ENCODE measurements at regions of chr14 and their contacts with region 1.

Region 1: GRCh38 chr14:50532502-50533240 is at the start of gene MAP4K5:
- DNase-seq: peak; percentile 90
- H3K4me3 ChIP-seq: peak within 1 kb of the TSS; percentile 90 to 98 (median 97)
- H3K27ac ChIP-seq: peak within 1 kb of the TSS; percentile 82
- H3K4me1 ChIP-seq: peaks cover 38% of the 10 kb centered on the region
- H3K27me3 ChIP-seq: no peaks in the 10 kb centered on the region
- CTCF ChIP-seq: peak; percentile 95 to 96
- POLR2A ChIP-seq: peak; percentile 68
- total RNA-seq, gene MAP4K5: 60.1 and 73.7 TPM in 2 replicates

Region 2: GRCh38 chr14:49862089-49862673 is 670.5 kb before region 1 on chr14:
- CTCF ChIA-PET with region 1: interaction called, 4 read pairs
- POLR2A ChIA-PET with region 1: no interaction called
- dilution Hi-C with region 1: no loop called
- intact Hi-C with region 1: loop called (anchors 2 kb)
- DNase-seq: peak; percentile 93
- H3K4me3 ChIP-seq: peak overlapping the region; percentile 59 to 91 (median 73)
- H3K27ac ChIP-seq: peak overlapping the region; percentile 77
- H3K4me1 ChIP-seq: peaks cover 15% of the 10 kb centered on the region
- H3K27me3 ChIP-seq: no peaks in the 10 kb centered on the region
- CTCF ChIP-seq: peak; percentile 100
- POLR2A ChIP-seq: no peak

Region 3: GRCh38 chr14:50173891-50174290 is 358.8 kb before region 1 on chr14:
- CTCF ChIA-PET with region 1: no interaction called
- POLR2A ChIA-PET with region 1: no interaction called
- dilution Hi-C with region 1: no loop called
- intact Hi-C with region 1: loop called (anchors 5 kb)
- DNase-seq: no peak
- H3K4me3 ChIP-seq: no peak overlapping the region
- H3K27ac ChIP-seq: no peak overlapping the region
- H3K4me1 ChIP-seq: no peaks in the 10 kb centered on the region
- H3K27me3 ChIP-seq: no peaks in the 10 kb centered on the region
- CTCF ChIP-seq: no peak
- POLR2A ChIP-seq: no peak

Region 4: DNA sequence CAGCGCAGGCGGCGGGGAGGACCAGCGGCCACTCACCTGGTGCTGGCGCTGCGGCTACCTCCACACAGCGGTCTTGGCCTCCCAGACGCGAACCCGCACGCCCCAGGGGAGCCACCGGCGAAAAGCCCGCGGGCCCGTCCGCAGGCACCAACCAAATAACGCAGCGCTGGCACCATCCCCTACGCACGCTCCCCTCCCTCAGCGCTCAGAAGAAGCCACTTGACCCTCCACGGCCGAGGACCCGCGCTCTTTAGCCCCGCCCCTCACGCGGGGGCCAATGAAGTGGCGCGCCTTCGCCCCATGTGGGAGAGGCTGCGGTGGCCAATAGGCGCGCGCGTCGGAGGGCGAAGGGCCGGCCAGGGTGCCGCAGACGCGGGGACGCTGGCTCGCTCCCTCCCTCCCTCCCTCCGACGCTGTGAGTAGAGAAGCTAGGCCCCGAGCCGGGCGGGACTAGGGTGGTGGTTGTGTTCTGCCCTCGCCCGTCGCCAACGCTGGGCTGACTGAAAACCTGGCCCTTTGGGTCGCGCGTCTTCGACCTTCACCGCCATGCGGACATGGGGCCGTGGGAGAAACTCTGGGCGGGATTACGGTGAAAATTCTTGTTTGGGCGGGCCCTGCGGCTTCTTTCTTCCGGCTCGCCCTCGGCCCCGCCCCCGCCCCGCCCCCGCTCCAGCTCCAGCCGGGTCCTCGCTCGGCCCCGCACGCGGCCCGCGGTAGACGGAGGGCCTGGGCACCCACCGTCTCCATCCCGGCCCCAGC is 220.5 kb before region 1 on chr14 and contains the starts of genes DMAC2L and L2HGDH:
- CTCF ChIA-PET with region 1: interaction called, 28 read pairs
- POLR2A ChIA-PET with region 1: interaction called, 4 read pairs
- dilution Hi-C with region 1: no loop called
- intact Hi-C with region 1: no loop called
- DNase-seq: peak; percentile 95
- H3K4me3 ChIP-seq: peak within 1 kb of the TSS; percentile 64 to 83 (median 79)
- H3K27ac ChIP-seq: peak within 1 kb of the TSS; percentile 66
- H3K4me1 ChIP-seq: peaks cover 15% of the 10 kb centered on the region
- H3K27me3 ChIP-seq: no peaks in the 10 kb centered on the region
- CTCF ChIP-seq: peak in 1 of 2 donors; percentile 60
- POLR2A ChIP-seq: peak; percentile 91
- total RNA-seq, gene DMAC2L: 7.9 and 13.9 TPM in 2 replicates
- total RNA-seq, gene L2HGDH: 5.3 and 5.4 TPM in 2 replicates

Region 5: GRCh38 chr14:50335389-50335788 is 197.3 kb before region 1 on chr14:
- CTCF ChIA-PET with region 1: interaction called, 3 read pairs
- POLR2A ChIA-PET with region 1: no interaction called
- dilution Hi-C with region 1: no loop called
- intact Hi-C with region 1: loop called (anchors 1 kb)
- DNase-seq: peak; percentile 78
- H3K4me3 ChIP-seq: no peak overlapping the region
- H3K27ac ChIP-seq: peak overlapping the region; percentile 61
- H3K4me1 ChIP-seq: peaks cover 24% of the 10 kb centered on the region
- H3K27me3 ChIP-seq: no peaks in the 10 kb centered on the region
- CTCF ChIP-seq: no peak
- POLR2A ChIP-seq: no peak

Region 6: GRCh38 chr14:50447461-50447860 is 85.2 kb before region 1 on chr14:
- CTCF ChIA-PET with region 1: interaction called, 4 read pairs
- POLR2A ChIA-PET with region 1: no interaction called
- dilution Hi-C with region 1: no loop called
- intact Hi-C with region 1: loop called (anchors 2 kb)
- DNase-seq: peak; percentile 81
- H3K4me3 ChIP-seq: no peak overlapping the region
- H3K27ac ChIP-seq: peak overlapping the region; percentile 78
- H3K4me1 ChIP-seq: peaks cover 16% of the 10 kb centered on the region
- H3K27me3 ChIP-seq: no peaks in the 10 kb centered on the region
- CTCF ChIP-seq: no peak
- POLR2A ChIP-seq: no peak

Region 7: DNA sequence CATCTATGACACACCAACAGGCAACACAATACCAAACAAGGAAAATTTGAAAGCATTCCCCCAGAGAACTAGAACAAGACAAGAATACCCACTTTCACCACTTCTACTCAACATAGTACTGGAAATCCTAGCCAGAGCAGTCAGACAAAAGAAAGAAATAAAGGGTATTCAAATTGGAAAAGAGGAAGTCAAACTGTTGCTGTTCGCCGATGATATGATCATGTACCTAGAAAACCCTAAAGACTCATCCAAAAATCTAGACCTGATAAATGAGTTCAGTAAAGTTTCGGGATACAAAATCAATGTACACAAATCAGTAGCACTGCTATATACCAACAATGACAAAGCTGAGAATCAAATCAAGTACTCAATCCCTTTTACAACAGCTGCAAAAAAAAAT is 19.2 kb after region 1 on chr14:
- CTCF ChIA-PET with region 1: no interaction called
- POLR2A ChIA-PET with region 1: no interaction called
- dilution Hi-C with region 1: no loop called
- intact Hi-C with region 1: no loop called
- DNase-seq: no peak
- H3K4me3 ChIP-seq: no peak overlapping the region
- H3K27ac ChIP-seq: no peak overlapping the region
- H3K4me1 ChIP-seq: no peaks in the 10 kb centered on the region
- H3K27me3 ChIP-seq: peaks cover 12 to 21% of the 10 kb centered on the region in 2 experiments
- CTCF ChIP-seq: no peak
- POLR2A ChIP-seq: no peak

Region 8: DNA sequence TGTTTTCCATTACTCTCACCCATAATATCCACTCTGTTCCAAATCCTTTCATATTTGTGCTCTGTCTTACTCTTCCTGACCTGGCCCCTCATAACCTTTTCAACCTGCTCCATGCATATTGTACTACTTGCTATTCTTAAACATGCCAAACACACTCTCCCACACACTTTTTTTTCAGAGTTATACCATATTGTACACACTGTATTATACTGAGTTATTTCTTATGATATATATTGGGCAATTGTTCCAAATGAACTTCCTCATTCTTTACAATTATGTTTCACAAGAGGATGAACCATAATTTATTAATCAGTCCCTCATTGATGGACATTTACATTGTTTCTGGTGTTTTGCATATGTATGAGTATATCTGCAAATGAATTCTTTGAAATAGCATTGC is 45.8 kb after region 1 on chr14:
- CTCF ChIA-PET with region 1: no interaction called
- POLR2A ChIA-PET with region 1: no interaction called
- dilution Hi-C with region 1: no loop called
- intact Hi-C with region 1: no loop called
- DNase-seq: no peak
- H3K4me3 ChIP-seq: no peak overlapping the region
- H3K27ac ChIP-seq: no peak overlapping the region
- H3K4me1 ChIP-seq: no peaks in the 10 kb centered on the region
- H3K27me3 ChIP-seq: no peaks in the 10 kb centered on the region
- CTCF ChIP-seq: no peak
- POLR2A ChIP-seq: no peak

Measured in endothelial cell of umbilical vein (primary cell).